HepG2 (cell line): ENCODE measurements at regions of chrX and their contacts with region 1.

Region 1: GRCh38 chrX:31199056-31199769 is 127.4 kb upstream of the FTHL17 start:
- DNase-seq: no peak
- ATAC-seq: no peak
- H3K4me3 ChIP-seq: no peak overlapping the region
- H3K27ac ChIP-seq: peak overlapping the region; percentile 57
- H3K4me1 ChIP-seq: peaks cover 17% of the 10 kb centered on the region
- H3K27me3 ChIP-seq: no peaks in the 10 kb centered on the region
- CTCF ChIP-seq: no peak
- EP300 ChIP-seq: no peak
- POLR2A ChIP-seq: no peak
- RAD21 ChIP-seq: no peak

Region 2: GRCh38 chrX:30111431-30111830 is 1087.8 kb before region 1 on chrX:
- CTCF ChIA-PET with region 1: no interaction called
- POLR2A ChIA-PET with region 1: no interaction called
- in situ Hi-C with region 1: no loop called
- intact Hi-C with region 1: no loop called
- DNase-seq: no peak
- ATAC-seq: no peak
- H3K4me3 ChIP-seq: no peak overlapping the region
- H3K27ac ChIP-seq: no peak overlapping the region
- H3K4me1 ChIP-seq: no peaks in the 10 kb centered on the region
- H3K27me3 ChIP-seq: no peaks in the 10 kb centered on the region
- CTCF ChIP-seq: no peak
- EP300 ChIP-seq: no peak
- POLR2A ChIP-seq: no peak
- RAD21 ChIP-seq: no peak

Region 3: DNA sequence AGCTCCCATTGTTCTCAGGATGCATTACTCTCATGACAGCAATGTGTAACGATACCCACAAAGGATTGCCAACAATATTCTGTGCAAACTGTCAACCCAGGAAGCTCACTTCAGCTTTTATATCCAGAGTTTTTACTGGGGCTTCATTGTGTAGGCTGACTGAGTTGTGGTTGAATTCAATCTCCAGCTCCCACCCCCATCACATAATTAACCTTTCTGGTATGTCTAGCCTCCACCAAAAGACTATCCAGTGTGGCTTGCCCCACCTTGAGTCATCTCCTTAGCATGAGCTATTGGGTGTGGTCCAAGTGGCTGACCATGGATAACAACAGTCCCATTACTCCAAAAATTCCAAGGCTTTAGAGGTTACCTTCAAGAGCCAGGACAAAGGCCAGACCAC is 292.5 kb before region 1 on chrX:
- CTCF ChIA-PET with region 1: no interaction called
- POLR2A ChIA-PET with region 1: no interaction called
- in situ Hi-C with region 1: no loop called
- intact Hi-C with region 1: no loop called
- DNase-seq: no peak
- ATAC-seq: no peak
- H3K4me3 ChIP-seq: no peak overlapping the region
- H3K27ac ChIP-seq: no peak overlapping the region
- H3K4me1 ChIP-seq: peaks cover 54% of the 10 kb centered on the region
- H3K27me3 ChIP-seq: no peaks in the 10 kb centered on the region
- CTCF ChIP-seq: no peak
- EP300 ChIP-seq: no peak
- POLR2A ChIP-seq: no peak
- RAD21 ChIP-seq: no peak

Region 4: DNA sequence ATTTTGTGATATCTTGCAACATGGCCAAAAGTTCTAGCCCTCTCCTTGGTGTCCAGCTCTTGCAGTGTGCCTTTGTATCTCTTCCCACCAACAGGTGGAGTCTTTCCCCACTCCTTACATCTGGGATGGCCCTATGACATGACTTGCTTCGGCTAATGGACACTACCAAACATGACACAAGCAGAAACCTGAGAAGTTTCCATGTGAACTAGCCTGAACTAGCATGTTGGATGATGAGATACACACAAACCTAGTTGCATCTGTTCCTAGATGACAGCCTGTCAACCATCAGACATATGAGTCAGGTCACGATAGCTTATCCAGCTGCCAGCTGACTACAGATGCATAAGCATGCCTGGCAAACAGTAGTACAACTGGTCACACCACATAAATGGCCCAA is 80.1 kb after region 1 on chrX:
- CTCF ChIA-PET with region 1: no interaction called
- POLR2A ChIA-PET with region 1: no interaction called
- in situ Hi-C with region 1: no loop called
- intact Hi-C with region 1: no loop called
- DNase-seq: peak; percentile 18
- ATAC-seq: peak; percentile 93
- H3K4me3 ChIP-seq: no peak overlapping the region
- H3K27ac ChIP-seq: no peak overlapping the region
- H3K4me1 ChIP-seq: no peaks in the 10 kb centered on the region
- H3K27me3 ChIP-seq: no peaks in the 10 kb centered on the region
- CTCF ChIP-seq: peak; percentile 64
- EP300 ChIP-seq: no peak
- POLR2A ChIP-seq: no peak
- RAD21 ChIP-seq: 0 out of 2 replicates have a peak, but pooled peaks have one; percentile 18

Region 5: GRCh38 chrX:31658360-31658759 is 459.1 kb after region 1 on chrX:
- CTCF ChIA-PET with region 1: no interaction called
- POLR2A ChIA-PET with region 1: no interaction called
- in situ Hi-C with region 1: no loop called
- intact Hi-C with region 1: loop called (anchors 5 kb)
- DNase-seq: peak; percentile 1
- ATAC-seq: no peak
- H3K4me3 ChIP-seq: no peak overlapping the region
- H3K27ac ChIP-seq: no peak overlapping the region
- H3K4me1 ChIP-seq: no peaks in the 10 kb centered on the region
- H3K27me3 ChIP-seq: no peaks in the 10 kb centered on the region
- CTCF ChIP-seq: peak; percentile 40
- EP300 ChIP-seq: no peak
- POLR2A ChIP-seq: no peak
- RAD21 ChIP-seq: no peak